ENCODE measurements at regions of chr7 and their contacts with region 1.

Region 1: DNA sequence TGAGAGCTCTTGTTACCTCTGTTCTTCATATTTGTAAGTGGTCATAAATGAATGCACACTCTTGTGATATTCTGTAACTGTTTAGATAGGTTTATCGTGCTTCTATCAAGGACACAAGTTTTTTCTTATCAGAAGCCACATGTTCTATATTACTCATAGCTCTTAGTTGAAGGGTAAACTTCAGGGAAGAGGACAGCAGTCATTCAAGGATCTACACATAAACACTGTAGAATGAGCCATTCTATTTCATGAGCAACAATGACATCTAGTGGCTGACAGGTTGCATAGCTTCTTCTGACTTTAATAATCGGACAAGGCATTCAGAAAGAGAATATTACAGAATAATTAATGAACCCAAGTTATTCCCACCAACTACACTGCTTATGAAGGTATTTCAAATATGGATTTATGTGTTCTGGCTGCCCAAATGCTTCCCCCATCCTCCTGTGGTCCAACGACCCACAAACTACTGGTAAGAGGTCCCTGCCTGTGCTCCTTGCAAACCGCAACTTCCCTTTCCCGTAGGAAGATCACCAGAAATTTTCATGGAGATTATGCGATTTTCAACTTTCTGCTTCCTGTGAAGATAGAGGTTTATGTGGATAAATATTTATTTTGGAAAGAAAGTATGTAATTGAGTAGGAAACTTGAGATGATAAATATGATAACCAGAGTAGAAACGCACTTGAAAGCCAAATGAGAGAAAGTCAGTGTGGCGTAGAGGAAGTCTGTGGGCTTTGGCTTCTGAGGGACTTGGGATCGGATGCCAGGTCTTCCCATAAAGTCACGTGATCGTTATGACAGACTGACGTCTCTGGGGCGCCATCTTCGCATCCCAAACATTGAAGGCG is 16.8 kb upstream of the ABCB5 start:
- DNase-seq: no peak
- H3K4me3 ChIP-seq: no peak overlapping the region
- H3K27ac ChIP-seq: no peak overlapping the region
- H3K4me1 ChIP-seq: no peaks in the 10 kb centered on the region
- H3K27me3 ChIP-seq: peaks cover 0 to 1% (median 0%) of the 10 kb centered on the region in 4 experiments; a peak in 1 of 7 replicates
- CTCF ChIP-seq: peak in 2 of 3 experiments; percentile 59 to 73; a peak in 2 of 4 replicates
- EP300 ChIP-seq: no peak
- POLR2A ChIP-seq: no peak
- RAD21 ChIP-seq: peak; percentile 96 to 97

Region 2: DNA sequence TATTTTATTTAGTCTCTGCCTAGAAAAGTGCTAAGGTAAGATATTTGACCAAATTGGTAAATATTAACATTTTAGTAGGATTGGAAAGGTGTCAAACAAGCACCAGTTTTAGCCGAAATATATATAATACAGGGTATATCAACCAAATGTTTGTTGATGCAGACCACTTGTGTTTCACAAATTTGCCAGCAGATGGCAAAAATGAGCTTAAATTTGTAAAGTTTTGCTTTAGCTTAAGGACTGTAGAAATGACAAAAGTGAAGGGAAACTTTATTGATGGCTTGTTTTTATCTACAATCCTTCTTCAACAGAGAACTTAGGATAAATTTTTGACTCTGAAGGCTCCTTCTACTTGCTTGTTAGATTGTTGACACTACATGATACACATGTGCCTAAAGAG is 885.0 kb before region 1 on chr7:
- CTCF ChIA-PET with region 1: interaction called, 32 read pairs
- POLR2A ChIA-PET with region 1: no interaction called
- DNase-seq: no peak
- H3K4me3 ChIP-seq: no peak overlapping the region
- H3K27ac ChIP-seq: no peak overlapping the region
- H3K4me1 ChIP-seq: no peaks in the 10 kb centered on the region
- H3K27me3 ChIP-seq: no peaks in the 10 kb centered on the region
- CTCF ChIP-seq: peak in 2 of 3 experiments; percentile 24 to 48; a peak in 2 of 4 replicates
- EP300 ChIP-seq: no peak
- POLR2A ChIP-seq: no peak
- RAD21 ChIP-seq: peak; percentile 61 to 62

Region 3: DNA sequence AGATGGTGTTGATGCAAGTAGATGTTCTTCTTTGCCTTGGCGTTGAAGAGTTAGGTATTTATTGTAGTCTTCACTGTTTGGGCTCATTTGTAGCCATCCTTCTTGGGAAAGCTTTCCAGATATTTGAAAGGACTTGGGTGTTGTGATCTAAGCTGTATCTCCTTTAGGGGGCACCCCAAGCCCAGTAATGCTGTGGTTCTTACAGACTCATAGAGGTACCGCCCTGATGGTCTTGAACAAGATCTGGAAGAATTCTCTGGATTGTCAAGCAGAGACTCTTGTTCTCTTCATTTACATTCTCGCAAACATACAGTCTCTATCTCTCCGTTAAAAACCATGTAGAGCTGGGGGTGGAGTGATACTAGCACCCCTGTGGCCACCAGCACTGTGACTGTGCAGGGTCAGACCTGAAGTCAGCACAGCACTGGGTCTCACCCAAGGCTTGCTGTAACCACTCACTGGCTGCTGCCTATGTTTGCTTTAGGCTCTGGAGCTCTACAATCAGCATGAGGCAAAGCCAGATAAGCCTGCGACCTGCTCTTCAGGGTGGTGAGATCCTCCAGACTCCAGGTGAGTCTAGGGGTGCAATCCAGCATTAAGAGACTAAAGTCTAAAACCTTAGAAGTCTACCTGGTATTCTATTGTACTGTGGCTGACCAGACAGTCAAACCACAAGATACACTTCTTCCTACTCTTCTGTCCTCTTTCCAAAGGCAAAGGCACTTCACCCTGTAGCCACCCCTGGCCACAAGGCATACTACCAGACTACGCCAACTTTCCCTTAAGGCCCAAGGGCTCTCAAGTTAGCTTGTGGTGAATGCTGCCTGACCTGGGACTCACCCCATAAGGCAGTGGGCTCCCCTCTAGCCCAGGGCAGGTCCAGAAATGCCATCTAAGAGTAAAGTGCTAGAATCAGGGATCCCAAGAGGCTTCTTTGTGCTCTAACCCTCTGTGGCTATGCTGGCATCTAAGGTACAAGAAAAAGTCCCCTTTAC is 615.5 kb before region 1 on chr7:
- CTCF ChIA-PET with region 1: interaction called, 10 read pairs
- POLR2A ChIA-PET with region 1: no interaction called
- DNase-seq: peak in 1 of 2 experiments; percentile 65
- H3K4me3 ChIP-seq: no peak overlapping the region
- H3K27ac ChIP-seq: no peak overlapping the region
- H3K4me1 ChIP-seq: peaks cover 0 to 8% (median 3%) of the 10 kb centered on the region in 4 experiments; a peak in 1 of 7 replicates
- H3K27me3 ChIP-seq: no peaks in the 10 kb centered on the region
- CTCF ChIP-seq: peak in 2 of 3 experiments; percentile 58 to 71; a peak in 3 of 4 replicates
- EP300 ChIP-seq: no peak
- POLR2A ChIP-seq: peak in 1 of 2 experiments; percentile 33; a peak in 1 of 3 replicates
- RAD21 ChIP-seq: peak; percentile 87 to 90

Region 4: GRCh38 chr7:20539201-20539600 is 59.5 kb before region 1 on chr7:
- CTCF ChIA-PET with region 1: interaction called, 16 read pairs
- POLR2A ChIA-PET with region 1: no interaction called
- DNase-seq: no peak
- H3K4me3 ChIP-seq: no peak overlapping the region
- H3K27ac ChIP-seq: no peak overlapping the region
- H3K4me1 ChIP-seq: no peaks in the 10 kb centered on the region
- H3K27me3 ChIP-seq: no peaks in the 10 kb centered on the region
- CTCF ChIP-seq: peak in 2 of 3 experiments; percentile 59 to 77; a peak in 3 of 4 replicates
- EP300 ChIP-seq: no peak
- POLR2A ChIP-seq: no peak
- RAD21 ChIP-seq: peak; percentile 63 to 72

Region 5: GRCh38 chr7:20651960-20652544 is 53.4 kb after region 1 on chr7:
- CTCF ChIA-PET with region 1: interaction called, 12 read pairs
- POLR2A ChIA-PET with region 1: no interaction called
- DNase-seq: no peak
- H3K4me3 ChIP-seq: no peak overlapping the region
- H3K27ac ChIP-seq: no peak overlapping the region
- H3K4me1 ChIP-seq: peaks cover 0 to 17% (median 4%) of the 10 kb centered on the region in 4 experiments; a peak in 3 of 7 replicates
- H3K27me3 ChIP-seq: peaks cover 0 to 13% (median 3%) of the 10 kb centered on the region in 4 experiments; a peak in 5 of 7 replicates
- CTCF ChIP-seq: peak in 2 of 3 experiments; percentile 5 to 48; a peak in 2 of 4 replicates
- EP300 ChIP-seq: no peak
- POLR2A ChIP-seq: no peak
- RAD21 ChIP-seq: no peak

Measured in H1 (cell line).